PC-3 (cell line): ENCODE measurements at regions of chr4 and their contacts with region 1.

Region 1: GRCh38 chr4:19224820-19225219 is 1026.9 kb upstream of the SLIT2 start:
- DNase-seq: peak; percentile 66
- ATAC-seq: no peak
- H3K4me3 ChIP-seq: no peak overlapping the region
- H3K27ac ChIP-seq: no peak overlapping the region
- H3K4me1 ChIP-seq: peaks cover 5% of the 10 kb centered on the region; the same call in 1 of the 2 replicates
- H3K27me3 ChIP-seq: no peaks in the 10 kb centered on the region
- CTCF ChIP-seq: peak; percentile 50

Region 2: GRCh38 chr4:19300213-19300612 is 75.4 kb after region 1 on chr4:
- CTCF ChIA-PET with region 1: no interaction called
- POLR2A ChIA-PET with region 1: no interaction called
- intact Hi-C with region 1: loop called (anchors 5 kb)
- DNase-seq: peak; percentile 16
- ATAC-seq: no peak
- H3K4me3 ChIP-seq: no peak overlapping the region
- H3K27ac ChIP-seq: no peak overlapping the region
- H3K4me1 ChIP-seq: peaks cover 16% of the 10 kb centered on the region
- H3K27me3 ChIP-seq: no peaks in the 10 kb centered on the region
- CTCF ChIP-seq: no peak

Region 3: DNA sequence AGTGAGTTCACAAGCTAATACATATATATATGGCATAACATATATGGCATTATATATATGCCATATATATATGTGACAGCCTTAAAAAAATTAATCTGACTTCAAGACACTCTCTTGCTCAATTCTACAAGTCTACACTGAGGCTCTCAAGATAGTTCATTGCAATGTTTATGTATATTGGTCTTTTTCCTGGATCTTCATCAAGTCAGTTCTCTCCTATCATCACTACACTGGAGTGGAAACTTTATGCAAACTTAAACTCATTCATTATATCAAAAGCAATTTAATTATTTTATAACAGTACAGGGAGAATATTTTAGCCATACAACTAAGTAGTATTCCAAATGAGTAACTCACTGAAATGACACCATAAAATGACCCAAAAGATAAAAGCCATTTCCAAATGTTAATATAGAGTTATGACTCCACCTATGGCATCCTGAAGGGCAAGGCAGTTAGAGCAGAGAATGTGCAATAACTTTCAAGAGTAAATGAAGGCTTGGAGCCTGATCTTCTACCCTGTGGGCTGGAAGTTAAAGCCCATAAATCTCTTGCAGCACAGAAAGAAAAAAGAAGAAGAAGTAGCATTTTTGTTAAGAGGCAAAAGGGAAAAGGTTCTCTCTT is 850.5 kb after region 1 on chr4:
- CTCF ChIA-PET with region 1: no interaction called
- POLR2A ChIA-PET with region 1: no interaction called
- intact Hi-C with region 1: loop called (anchors 10 kb)
- DNase-seq: peak; percentile 38
- ATAC-seq: peak; percentile 60
- H3K4me3 ChIP-seq: no peak overlapping the region
- H3K27ac ChIP-seq: no peak overlapping the region
- H3K4me1 ChIP-seq: no peaks in the 10 kb centered on the region
- H3K27me3 ChIP-seq: no peaks in the 10 kb centered on the region
- CTCF ChIP-seq: peak; percentile 35